ENCODE measurements at regions of chr15 and their contacts with region 1.

Region 1: DNA sequence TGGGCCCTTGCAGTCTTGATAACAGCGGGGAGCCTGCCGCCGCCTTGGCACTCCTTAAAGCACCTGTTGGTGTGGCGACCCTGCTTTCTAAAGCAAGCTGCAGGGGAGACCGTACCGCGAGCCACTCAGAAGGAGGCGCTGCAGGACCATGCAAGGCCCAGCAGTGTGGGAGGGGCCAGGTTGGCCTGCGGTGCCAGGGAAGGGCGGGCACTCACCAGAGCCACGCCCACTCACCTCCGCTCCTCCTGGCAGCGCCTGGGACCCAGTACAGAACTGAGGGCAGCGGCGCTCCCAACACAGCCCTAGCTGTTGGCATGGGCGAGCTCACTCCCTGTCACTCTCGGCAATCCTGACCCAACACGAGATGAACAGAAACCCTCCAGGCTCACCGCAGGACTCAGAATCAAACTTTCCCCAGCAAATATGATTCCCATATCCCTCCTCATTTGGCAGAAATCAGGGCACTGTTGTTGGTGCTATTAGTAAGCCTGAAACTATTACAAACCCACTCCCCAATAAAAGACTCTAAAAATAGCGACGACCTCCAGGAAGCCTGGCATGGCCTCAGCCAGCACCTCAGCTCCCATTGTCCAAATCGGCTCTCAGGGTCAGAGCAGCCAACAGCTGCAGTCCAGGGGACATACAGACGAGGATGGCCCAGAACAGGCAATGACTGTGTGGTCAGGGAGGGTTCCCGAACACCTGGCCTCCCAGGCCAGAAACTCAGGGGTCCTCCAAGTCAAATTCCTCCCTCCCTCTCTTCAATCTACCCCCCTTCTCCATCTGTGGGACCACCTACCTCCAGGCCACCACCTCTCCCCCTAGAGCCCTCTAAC is 77.2 kb downstream of the TBC1D2B start:
- DNase-seq: peak; percentile 58
- H3K4me3 Mint-ChIP-seq: no peak overlapping the region
- H3K27ac Mint-ChIP-seq: peak overlapping the region; percentile 18
- H3K4me1 Mint-ChIP-seq: peaks cover 16% of the 10 kb centered on the region
- H3K27me3 Mint-ChIP-seq: no peaks in the 10 kb centered on the region

Region 2: GRCh38 chr15:77738441-77739302 is 261.6 kb before region 1 on chr15:
- intact Hi-C with region 1: no loop called
- DNase-seq: no peak
- H3K4me3 Mint-ChIP-seq: no peak overlapping the region
- H3K27ac Mint-ChIP-seq: no peak overlapping the region
- H3K4me1 Mint-ChIP-seq: no peaks in the 10 kb centered on the region
- H3K27me3 Mint-ChIP-seq: peaks cover 6% of the 10 kb centered on the region

Region 3: DNA sequence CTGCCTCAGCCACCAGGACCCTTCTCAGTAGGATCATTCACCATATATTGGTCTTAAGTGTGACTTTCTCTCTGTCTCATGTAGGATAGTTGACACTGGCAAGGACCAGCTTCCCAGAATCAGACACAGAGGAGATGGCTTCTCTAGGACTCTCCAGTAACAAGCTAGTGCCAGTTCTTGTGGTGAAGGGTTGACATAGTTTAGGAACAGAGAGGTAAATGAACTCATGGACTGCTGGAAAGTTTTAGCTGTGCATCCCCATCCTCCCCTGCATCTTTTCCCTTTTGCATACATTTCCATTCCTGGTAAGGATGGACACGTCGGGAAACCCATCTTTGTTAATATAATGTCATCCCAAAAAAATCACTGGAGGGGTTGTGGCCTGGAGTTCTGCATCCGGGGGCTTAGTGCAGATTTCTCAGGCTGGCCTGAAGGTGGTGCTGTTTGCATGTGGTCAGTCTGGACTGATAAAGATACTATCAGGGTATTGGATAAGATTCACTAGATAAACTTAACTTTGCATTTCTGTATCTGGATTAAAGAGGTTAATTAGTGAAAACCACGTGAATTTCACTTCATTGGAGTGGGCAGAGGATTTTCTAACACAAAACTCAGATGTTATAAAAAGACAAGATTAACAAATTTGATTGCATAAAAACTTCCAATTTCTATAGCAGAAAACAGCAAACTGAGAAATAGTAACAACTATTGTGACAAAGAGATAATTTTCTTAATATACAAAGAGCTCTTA is 33.6 kb before region 1 on chr15:
- intact Hi-C with region 1: loop called (anchors 5 kb)
- DNase-seq: peak; percentile 18
- H3K4me3 Mint-ChIP-seq: no peak overlapping the region
- H3K27ac Mint-ChIP-seq: no peak overlapping the region
- H3K4me1 Mint-ChIP-seq: no peaks in the 10 kb centered on the region
- H3K27me3 Mint-ChIP-seq: peaks cover 51% of the 10 kb centered on the region